ENCODE measurements at regions of chr19 and their contacts with region 1.

Region 1: GRCh38 chr19:2179095-2179494 is 15.4 kb downstream of the DOT1L start:
- DNase-seq: no peak
- H3K4me3 ChIP-seq: no peak overlapping the region
- H3K4me3 Mint-ChIP-seq: no peak overlapping the region
- H3K27ac Mint-ChIP-seq: peak overlapping the region; percentile 11
- H3K4me1 ChIP-seq: no peaks in the 10 kb centered on the region
- H3K4me1 Mint-ChIP-seq: peaks cover 3% of the 10 kb centered on the region
- H3K27me3 ChIP-seq: no peaks in the 10 kb centered on the region
- H3K27me3 Mint-ChIP-seq: no peaks in the 10 kb centered on the region
- CTCF ChIP-seq: no peak

Region 2: GRCh38 chr19:2076526-2076981 is 102.5 kb before region 1 on chr19:
- CTCF ChIA-PET with region 1: no interaction called
- POLR2A ChIA-PET with region 1: interaction called, 18 read pairs
- intact Hi-C with region 1: no loop called
- DNase-seq: no peak
- H3K4me3 ChIP-seq: no peak overlapping the region
- H3K4me3 Mint-ChIP-seq: no peak overlapping the region
- H3K27ac Mint-ChIP-seq: no peak overlapping the region
- H3K4me1 ChIP-seq: no peaks in the 10 kb centered on the region
- H3K4me1 Mint-ChIP-seq: no peaks in the 10 kb centered on the region
- H3K27me3 ChIP-seq: no peaks in the 10 kb centered on the region
- H3K27me3 Mint-ChIP-seq: no peaks in the 10 kb centered on the region
- CTCF ChIP-seq: no peak